K562 (cell line): ENCODE measurements at regions of chr10 and their contacts with region 1.

Region 1: DNA sequence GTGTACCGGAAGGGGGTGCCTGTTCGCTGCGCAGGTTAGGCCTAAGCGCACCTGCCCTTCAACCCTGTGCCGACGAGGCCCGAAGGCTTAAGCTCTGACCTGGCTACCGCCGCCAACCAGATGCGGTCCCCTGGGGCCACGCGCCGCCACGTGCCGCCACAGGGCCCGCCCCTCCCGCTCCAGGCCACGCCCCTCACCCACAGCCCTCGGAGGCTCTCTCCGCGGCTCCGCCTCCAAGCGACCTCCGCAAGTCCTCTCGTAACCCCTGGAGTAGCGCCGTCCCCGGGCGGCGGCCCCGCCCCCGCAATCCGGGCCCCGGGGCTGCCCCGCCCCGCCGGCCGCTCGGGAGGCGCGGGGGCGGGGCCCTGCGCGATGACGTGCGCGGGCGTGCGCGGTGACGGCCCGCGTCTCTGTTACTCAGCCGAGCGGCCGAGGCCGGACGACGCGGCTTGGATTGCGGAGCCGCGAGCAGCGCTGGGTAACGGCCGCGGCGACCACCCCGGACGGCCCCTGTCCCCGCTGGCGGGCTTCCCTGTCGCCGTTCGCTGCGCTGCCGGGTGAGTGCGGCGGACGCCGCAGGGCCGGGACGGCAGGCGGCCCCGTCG is at the start of gene MAPK8:
- DNase-seq: peak; percentile 97 to 100 (median 100)
- ATAC-seq: peak; percentile 92
- H3K4me3 ChIP-seq: peak within 1 kb of the TSS; percentile 81
- H3K27ac ChIP-seq: peak within 1 kb of the TSS; percentile 90
- H3K4me1 ChIP-seq: peaks cover 9 to 19% of the 10 kb centered on the region in 2 experiments
- H3K27me3 ChIP-seq: no peaks in the 10 kb centered on the region; a peak in 1 of 5 replicates
- CTCF ChIP-seq: no peak; a peak in 1 of 6 replicates
- EP300 ChIP-seq: 0 out of 2 replicates have a peak, but pooled peaks have one; percentile 23
- POLR2A ChIP-seq: peak; percentile 88
- RAD21 ChIP-seq: no peak
- polyA plus RNA-seq, gene MAPK8: 6.4 to 6.8 TPM

Region 2: GRCh38 chr10:48254750-48255512 is 51.4 kb before region 1 on chr10:
- CTCF ChIA-PET with region 1: no interaction called
- POLR2A ChIA-PET with region 1: no interaction called
- in situ Hi-C with region 1: no loop called
- intact Hi-C with region 1: loop called (anchors 5 kb)
- DNase-seq: no peak
- ATAC-seq: no peak
- H3K4me3 ChIP-seq: no peak overlapping the region
- H3K27ac ChIP-seq: no peak overlapping the region
- H3K4me1 ChIP-seq: 0 out of 5 replicates have a peak, but pooled peaks cover 0 to 2% of the 10 kb centered on the region in 2 experiments
- H3K27me3 ChIP-seq: peaks cover 17 to 42% of the 10 kb centered on the region in 2 experiments
- CTCF ChIP-seq: no peak
- EP300 ChIP-seq: no peak
- POLR2A ChIP-seq: no peak
- RAD21 ChIP-seq: no peak

Region 3: GRCh38 chr10:48317321-48317990 is 11.1 kb after region 1 on chr10:
- CTCF ChIA-PET with region 1: no interaction called
- POLR2A ChIA-PET with region 1: interaction called, 15 read pairs
- in situ Hi-C with region 1: no loop called
- intact Hi-C with region 1: no loop called
- DNase-seq: no peak
- ATAC-seq: no peak; the same call in 2 of the 3 replicates
- H3K4me3 ChIP-seq: no peak overlapping the region
- H3K27ac ChIP-seq: no peak overlapping the region
- H3K4me1 ChIP-seq: peaks cover 0 to 14% of the 10 kb centered on the region in 2 experiments; a peak in 4 of 5 replicates
- H3K27me3 ChIP-seq: no peaks in the 10 kb centered on the region
- CTCF ChIP-seq: no peak
- EP300 ChIP-seq: no peak
- POLR2A ChIP-seq: no peak
- RAD21 ChIP-seq: no peak

Region 4: GRCh38 chr10:48324580-48324979 is 18.2 kb after region 1 on chr10:
- CTCF ChIA-PET with region 1: no interaction called
- POLR2A ChIA-PET with region 1: interaction called, 13 read pairs
- in situ Hi-C with region 1: no loop called
- intact Hi-C with region 1: no loop called
- DNase-seq: no peak
- ATAC-seq: no peak
- H3K4me3 ChIP-seq: no peak overlapping the region
- H3K27ac ChIP-seq: no peak overlapping the region
- H3K4me1 ChIP-seq: no peaks in the 10 kb centered on the region
- H3K27me3 ChIP-seq: no peaks in the 10 kb centered on the region
- CTCF ChIP-seq: no peak
- EP300 ChIP-seq: no peak
- POLR2A ChIP-seq: no peak
- RAD21 ChIP-seq: no peak

Region 5: DNA sequence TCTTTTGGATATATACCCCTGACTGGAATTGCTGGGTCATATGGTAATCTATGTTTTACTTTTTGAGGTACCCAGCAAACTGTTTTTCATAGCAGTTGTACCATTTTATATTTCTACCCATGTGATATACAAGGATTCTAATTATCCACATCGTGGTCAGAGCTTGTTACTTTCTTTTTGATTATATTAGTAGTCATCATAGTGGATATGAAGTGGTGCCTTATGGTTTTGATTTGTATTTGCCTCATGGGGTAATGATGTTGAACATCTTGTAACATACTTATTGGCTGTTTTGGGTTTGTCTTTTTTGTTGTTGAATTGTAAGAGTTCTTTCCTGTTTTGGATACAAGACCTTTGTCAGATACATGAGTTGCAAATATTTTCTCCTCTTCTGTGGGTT is 51.8 kb after region 1 on chr10:
- CTCF ChIA-PET with region 1: interaction called, 4 read pairs
- POLR2A ChIA-PET with region 1: no interaction called
- in situ Hi-C with region 1: no loop called
- intact Hi-C with region 1: loop called (anchors 5 kb)
- DNase-seq: no peak
- ATAC-seq: no peak
- H3K4me3 ChIP-seq: no peak overlapping the region
- H3K27ac ChIP-seq: no peak overlapping the region
- H3K4me1 ChIP-seq: peaks cover 6 to 19% of the 10 kb centered on the region in 2 experiments; a peak in 4 of 5 replicates
- H3K27me3 ChIP-seq: no peaks in the 10 kb centered on the region
- CTCF ChIP-seq: no peak
- EP300 ChIP-seq: no peak
- POLR2A ChIP-seq: no peak
- RAD21 ChIP-seq: no peak

Region 6: GRCh38 chr10:49350846-49351532 is 1044.6 kb after region 1 on chr10:
- CTCF ChIA-PET with region 1: no interaction called
- POLR2A ChIA-PET with region 1: no interaction called
- in situ Hi-C with region 1: no loop called
- intact Hi-C with region 1: no loop called
- DNase-seq: no peak
- ATAC-seq: no peak
- H3K4me3 ChIP-seq: no peak overlapping the region
- H3K27ac ChIP-seq: no peak overlapping the region
- H3K4me1 ChIP-seq: no peaks in the 10 kb centered on the region
- H3K27me3 ChIP-seq: peaks cover 3 to 31% of the 10 kb centered on the region in 2 experiments; a peak in 3 of 5 replicates
- CTCF ChIP-seq: no peak
- EP300 ChIP-seq: no peak
- POLR2A ChIP-seq: no peak
- RAD21 ChIP-seq: no peak

Region 7: DNA sequence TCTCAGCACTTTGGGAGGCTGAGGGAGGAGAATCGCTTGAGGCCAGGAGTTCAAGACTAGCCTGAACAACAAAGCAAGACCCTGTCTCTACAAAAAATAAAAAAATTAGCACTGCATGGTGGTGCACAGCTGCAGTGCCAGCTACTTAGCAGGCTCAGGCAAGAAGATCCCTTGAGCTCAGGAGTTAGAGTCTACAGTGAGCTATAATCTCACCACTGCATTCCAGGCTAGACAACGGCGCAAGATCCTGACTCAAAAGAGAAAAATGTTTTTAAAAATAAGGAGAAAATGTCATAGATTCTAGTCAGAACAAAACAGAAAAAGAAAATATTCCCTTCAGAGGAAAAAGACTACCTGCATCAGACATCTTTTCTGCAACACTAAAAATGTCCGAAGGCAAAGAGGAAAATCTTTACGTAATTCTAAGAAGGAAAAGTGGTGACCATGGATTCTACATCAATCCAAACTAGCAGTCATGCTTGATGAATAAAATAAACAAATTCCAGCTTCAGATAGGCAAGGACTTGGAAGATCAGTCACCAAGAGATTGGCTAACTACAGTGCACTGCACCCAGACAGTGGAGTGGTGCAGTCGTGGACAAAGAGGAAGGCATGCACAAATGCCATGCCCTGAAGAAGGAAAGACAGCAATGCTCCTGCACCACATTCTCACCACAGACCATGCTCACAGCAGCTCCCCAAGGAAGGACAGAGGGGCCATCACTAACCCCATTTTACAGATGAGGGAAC is 1178.3 kb after region 1 on chr10:
- CTCF ChIA-PET with region 1: no interaction called
- POLR2A ChIA-PET with region 1: no interaction called
- in situ Hi-C with region 1: no loop called
- intact Hi-C with region 1: no loop called
- DNase-seq: no peak
- ATAC-seq: no peak
- H3K4me3 ChIP-seq: no peak overlapping the region
- H3K27ac ChIP-seq: no peak overlapping the region
- H3K4me1 ChIP-seq: no peaks in the 10 kb centered on the region
- H3K27me3 ChIP-seq: no peaks in the 10 kb centered on the region
- CTCF ChIP-seq: no peak
- EP300 ChIP-seq: no peak
- POLR2A ChIP-seq: no peak
- RAD21 ChIP-seq: no peak